ENCODE measurements at regions of chr21 and their contacts with region 1.

Region 1: DNA sequence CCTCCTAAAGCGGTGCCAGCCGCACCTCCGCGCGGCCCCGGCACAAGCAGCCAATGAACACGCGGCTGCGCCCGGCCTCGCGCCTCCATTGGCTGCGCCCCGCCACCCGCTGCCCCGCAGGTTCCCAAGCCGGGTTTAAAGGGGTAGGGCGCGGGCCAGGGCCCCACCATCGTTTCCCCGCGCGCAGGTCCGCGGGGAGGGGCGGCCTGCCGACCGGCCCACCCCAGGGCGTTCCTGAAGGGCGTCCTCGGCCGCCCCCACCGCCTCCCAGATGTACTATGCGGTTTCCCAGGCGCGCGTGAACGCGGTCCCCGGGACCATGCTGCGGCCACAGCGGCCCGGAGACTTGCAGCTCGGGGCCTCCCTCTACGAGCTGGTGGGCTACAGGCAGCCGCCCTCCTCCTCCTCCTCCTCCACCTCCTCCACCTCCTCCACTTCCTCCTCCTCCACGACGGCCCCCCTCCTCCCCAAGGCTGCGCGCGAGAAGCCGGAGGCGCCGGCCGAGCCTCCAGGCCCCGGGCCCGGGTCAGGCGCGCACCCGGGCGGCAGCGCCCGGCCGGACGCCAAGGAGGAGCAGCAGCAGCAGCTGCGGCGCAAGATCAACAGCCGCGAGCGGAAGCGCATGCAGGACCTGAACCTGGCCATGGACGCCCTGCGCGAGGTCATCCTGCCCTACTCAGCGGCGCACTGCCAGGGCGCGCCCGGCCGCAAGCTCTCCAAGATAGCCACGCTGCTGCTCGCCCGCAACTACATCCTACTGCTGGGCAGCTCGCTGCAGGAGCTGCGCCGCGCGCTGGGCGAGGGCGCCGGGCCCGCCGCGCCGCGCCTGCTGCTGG is at the start of gene OLIG1:
- DNase-seq: peak; percentile 48
- H3K4me3 Mint-ChIP-seq: peak within 1 kb of the TSS; percentile 64
- H3K27ac Mint-ChIP-seq: no peak within 1 kb of the TSS
- H3K4me1 Mint-ChIP-seq: peaks cover 12% of the 10 kb centered on the region
- H3K27me3 Mint-ChIP-seq: peaks cover 64% of the 10 kb centered on the region
- total RNA-seq, gene OLIG1: not detected

Region 2: DNA sequence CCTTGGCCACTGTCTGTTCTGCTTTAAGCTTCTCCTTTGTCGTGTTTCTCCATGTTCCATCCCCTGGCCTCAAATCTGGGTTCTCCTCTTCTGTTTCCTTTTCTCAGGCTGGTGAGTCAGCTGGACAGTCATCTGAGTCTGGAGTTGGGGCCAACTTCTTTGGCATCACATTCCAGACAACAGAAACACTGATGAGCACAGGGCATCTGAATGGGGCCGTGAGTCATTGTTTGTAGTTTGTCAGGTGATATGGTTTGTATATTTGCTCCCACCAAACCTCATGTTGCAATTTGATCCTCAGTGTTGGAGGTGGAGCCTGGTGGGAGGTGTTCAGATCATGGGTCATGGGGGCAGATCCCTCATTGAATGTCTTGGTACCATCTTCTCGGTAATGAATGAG is 58.7 kb before region 1 on chr21:
- CTCF ChIA-PET with region 1: no interaction called
- POLR2A ChIA-PET with region 1: no interaction called
- intact Hi-C with region 1: no loop called
- DNase-seq: no peak
- H3K4me3 Mint-ChIP-seq: no peak overlapping the region
- H3K27ac Mint-ChIP-seq: no peak overlapping the region
- H3K4me1 Mint-ChIP-seq: no peaks in the 10 kb centered on the region
- H3K27me3 Mint-ChIP-seq: peaks cover 32% of the 10 kb centered on the region

Region 3: GRCh38 chr21:33025489-33026442 is 44.4 kb before region 1 on chr21 and contains the start of gene OLIG2:
- CTCF ChIA-PET with region 1: no interaction called
- POLR2A ChIA-PET with region 1: no interaction called
- intact Hi-C with region 1: loop called (anchors 2 kb)
- DNase-seq: peak; percentile 15
- H3K4me3 Mint-ChIP-seq: peak within 1 kb of the TSS; percentile 18
- H3K27ac Mint-ChIP-seq: peak within 1 kb of the TSS; percentile 0
- H3K4me1 Mint-ChIP-seq: peaks cover 48% of the 10 kb centered on the region
- H3K27me3 Mint-ChIP-seq: peaks cover 78% of the 10 kb centered on the region
- total RNA-seq, gene OLIG2: not detected